Activated T-helper 2 cell treated with anti-CD3 and anti-CD28 coated beads, Interferon-gamma antibody, Interleukin-2, Interleukin-4, amounts not matched to agents 10 μg/mL and 5 μg/mL and 100 μg/mL, durations not matched to agents 14 hours and 24 hours and 36 hours (primary cell): ENCODE measurements at regions of chr11 and their contacts with region 1.

Region 1: DNA sequence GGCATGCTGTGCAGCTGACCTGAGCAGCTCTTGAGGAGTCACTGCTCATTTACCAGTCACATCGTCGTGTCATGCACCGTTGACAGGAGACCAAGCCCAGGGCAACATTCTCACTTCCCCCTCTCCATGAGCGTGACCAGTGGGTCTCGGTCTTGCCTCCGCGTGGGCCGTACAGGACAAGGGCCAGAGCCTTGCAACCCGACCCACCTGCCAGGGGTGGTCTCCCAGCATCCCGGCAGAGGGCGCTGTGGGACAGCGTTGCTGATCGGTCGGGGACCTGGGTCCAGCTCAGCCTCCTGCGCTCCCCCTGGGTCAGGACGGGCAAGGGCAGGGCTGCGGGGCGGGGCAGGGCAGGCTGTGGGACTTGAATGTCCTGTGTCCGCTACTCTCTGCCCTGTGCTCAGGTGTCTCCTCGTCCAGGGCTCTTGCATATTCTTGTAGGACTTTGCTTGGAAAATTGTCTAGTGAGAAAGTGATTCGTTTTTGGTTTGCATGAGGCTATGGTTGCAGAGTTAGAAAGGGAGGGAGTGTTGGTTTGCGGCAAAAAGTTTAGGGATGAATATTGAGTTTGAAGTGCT is 16.2 kb downstream of the EIF4G2 start:
- DNase-seq: peak; percentile 73
- H3K4me3 Mint-ChIP-seq: no peak overlapping the region
- H3K27ac Mint-ChIP-seq: no peak overlapping the region
- H3K4me1 Mint-ChIP-seq: peaks cover 11% of the 10 kb centered on the region
- H3K27me3 Mint-ChIP-seq: peaks cover 18% of the 10 kb centered on the region

Region 2: DNA sequence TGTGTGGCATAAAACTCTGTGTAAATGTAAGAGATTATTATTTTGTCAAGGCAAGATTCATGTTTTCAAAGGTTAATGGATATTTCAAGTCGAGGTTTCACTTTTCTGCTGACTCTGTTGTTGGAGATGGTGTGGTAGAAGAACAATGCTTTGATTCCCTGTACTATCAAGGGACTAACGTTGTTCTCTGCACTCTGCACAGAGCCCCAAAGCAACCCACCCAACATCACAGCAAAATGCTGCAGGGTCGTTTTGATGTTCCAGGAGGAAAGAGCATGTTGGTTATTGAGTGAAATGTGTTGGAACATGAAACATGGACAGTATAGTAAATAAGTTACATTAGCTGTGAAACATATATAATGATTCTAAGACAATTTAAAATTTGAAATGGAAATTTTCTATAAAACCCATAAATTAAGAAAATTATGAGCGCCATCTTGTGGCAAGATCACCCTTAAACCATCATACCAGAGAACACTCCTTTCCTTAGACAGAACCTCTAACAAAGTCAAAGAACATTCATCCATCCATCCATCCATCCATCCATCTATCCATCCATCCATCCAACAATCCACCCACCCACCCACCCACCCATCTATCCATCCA is 229.7 kb after region 1 on chr11:
- intact Hi-C with region 1: loop called (anchors 1 kb)
- DNase-seq: no peak
- H3K4me3 Mint-ChIP-seq: no peak overlapping the region
- H3K27ac Mint-ChIP-seq: no peak overlapping the region
- H3K4me1 Mint-ChIP-seq: no peaks in the 10 kb centered on the region
- H3K27me3 Mint-ChIP-seq: peaks cover 9% of the 10 kb centered on the region

Region 3: GRCh38 chr11:11787305-11788062 is 995.0 kb after region 1 on chr11:
- intact Hi-C with region 1: loop called (anchors 2 kb)
- DNase-seq: peak; percentile 37
- H3K4me3 Mint-ChIP-seq: no peak overlapping the region
- H3K27ac Mint-ChIP-seq: no peak overlapping the region
- H3K4me1 Mint-ChIP-seq: no peaks in the 10 kb centered on the region
- H3K27me3 Mint-ChIP-seq: peaks cover 3% of the 10 kb centered on the region